B cell (primary cell): ENCODE measurements at regions of chr6 and their contacts with region 1.

Region 1: GRCh38 chr6:119110601-119111548 is 32.4 kb upstream of the FAM184A start:
- DNase-seq: peak; percentile 65
- ATAC-seq: peak; percentile 45
- H3K4me3 ChIP-seq: no peak overlapping the region
- H3K4me3 Mint-ChIP-seq: no peak overlapping the region
- H3K27ac ChIP-seq: no peak overlapping the region
- H3K27ac Mint-ChIP-seq: no peak overlapping the region
- H3K4me1 ChIP-seq: no peaks in the 10 kb centered on the region
- H3K4me1 Mint-ChIP-seq: peaks cover 8% of the 10 kb centered on the region
- H3K27me3 ChIP-seq: no peaks in the 10 kb centered on the region
- H3K27me3 Mint-ChIP-seq: peaks cover 10% of the 10 kb centered on the region
- CTCF ChIP-seq: peak; percentile 74

Region 2: DNA sequence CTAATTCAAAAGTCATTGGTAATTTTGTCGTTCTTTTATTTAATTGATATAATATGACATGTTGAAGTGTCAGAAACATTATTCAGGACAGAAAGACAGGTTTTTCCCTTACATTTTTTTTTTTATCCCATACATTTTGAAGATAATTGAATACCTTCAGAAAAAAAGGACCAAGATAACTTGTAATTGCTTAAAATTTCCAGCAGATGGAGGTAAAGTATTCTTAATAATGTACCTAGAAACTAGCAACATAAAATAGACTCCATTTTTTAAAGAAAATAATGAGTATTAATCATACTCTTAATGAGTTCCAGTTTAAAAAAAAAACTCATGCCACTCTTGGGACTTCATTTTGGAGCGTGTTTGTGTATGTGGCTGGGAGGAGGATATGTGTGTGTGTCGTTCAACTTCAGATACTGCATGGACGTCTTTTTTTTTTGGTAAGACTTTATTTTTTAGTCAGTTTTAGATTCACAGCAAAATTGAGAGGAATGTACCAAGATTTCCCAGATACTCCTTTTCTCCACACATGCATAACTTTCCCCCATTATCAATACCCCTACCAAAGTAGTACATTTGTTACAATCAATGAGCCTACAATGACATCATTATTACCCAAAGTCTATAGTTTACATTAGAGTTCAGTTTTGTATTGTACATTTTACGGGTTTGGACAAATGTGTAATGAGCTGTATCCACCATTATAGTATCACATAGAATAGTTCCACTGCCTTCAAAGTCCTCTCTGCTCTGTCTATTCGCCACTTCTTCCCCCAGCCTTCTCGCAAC is 1764.5 kb before region 1 on chr6:
- CTCF ChIA-PET with region 1: interaction called, 3 read pairs
- POLR2A ChIA-PET with region 1: no interaction called
- intact Hi-C with region 1: loop called (anchors 2 kb)
- DNase-seq: peak; percentile 20
- ATAC-seq: no peak
- H3K4me3 ChIP-seq: no peak overlapping the region
- H3K4me3 Mint-ChIP-seq: no peak overlapping the region
- H3K27ac ChIP-seq: no peak overlapping the region
- H3K27ac Mint-ChIP-seq: no peak overlapping the region
- H3K4me1 ChIP-seq: no peaks in the 10 kb centered on the region
- H3K4me1 Mint-ChIP-seq: no peaks in the 10 kb centered on the region
- H3K27me3 ChIP-seq: no peaks in the 10 kb centered on the region
- H3K27me3 Mint-ChIP-seq: peaks cover 8% of the 10 kb centered on the region
- CTCF ChIP-seq: peak; percentile 85

Region 3: GRCh38 chr6:117449549-117450439 is 1661.1 kb before region 1 on chr6:
- CTCF ChIA-PET with region 1: interaction called, 8 read pairs
- POLR2A ChIA-PET with region 1: no interaction called
- intact Hi-C with region 1: loop called (anchors 2 kb)
- DNase-seq: peak; percentile 63
- ATAC-seq: no peak
- H3K4me3 ChIP-seq: no peak overlapping the region
- H3K4me3 Mint-ChIP-seq: no peak overlapping the region
- H3K27ac ChIP-seq: no peak overlapping the region
- H3K27ac Mint-ChIP-seq: no peak overlapping the region
- H3K4me1 ChIP-seq: no peaks in the 10 kb centered on the region
- H3K4me1 Mint-ChIP-seq: no peaks in the 10 kb centered on the region
- H3K27me3 ChIP-seq: peaks cover 0 to 13% (median 5%) of the 10 kb centered on the region in 4 experiments
- H3K27me3 Mint-ChIP-seq: peaks cover 33% of the 10 kb centered on the region
- CTCF ChIP-seq: peak; percentile 79

Region 4: GRCh38 chr6:117976030-117976651 is 1134.7 kb before region 1 on chr6:
- CTCF ChIA-PET with region 1: interaction called, 11 read pairs
- POLR2A ChIA-PET with region 1: no interaction called
- intact Hi-C with region 1: no loop called
- DNase-seq: peak; percentile 19
- ATAC-seq: no peak
- H3K4me3 ChIP-seq: no peak overlapping the region
- H3K4me3 Mint-ChIP-seq: no peak overlapping the region
- H3K27ac ChIP-seq: no peak overlapping the region
- H3K27ac Mint-ChIP-seq: no peak overlapping the region
- H3K4me1 ChIP-seq: no peaks in the 10 kb centered on the region
- H3K4me1 Mint-ChIP-seq: no peaks in the 10 kb centered on the region
- H3K27me3 ChIP-seq: no peaks in the 10 kb centered on the region
- H3K27me3 Mint-ChIP-seq: peaks cover 8% of the 10 kb centered on the region
- CTCF ChIP-seq: peak; percentile 63

Region 5: DNA sequence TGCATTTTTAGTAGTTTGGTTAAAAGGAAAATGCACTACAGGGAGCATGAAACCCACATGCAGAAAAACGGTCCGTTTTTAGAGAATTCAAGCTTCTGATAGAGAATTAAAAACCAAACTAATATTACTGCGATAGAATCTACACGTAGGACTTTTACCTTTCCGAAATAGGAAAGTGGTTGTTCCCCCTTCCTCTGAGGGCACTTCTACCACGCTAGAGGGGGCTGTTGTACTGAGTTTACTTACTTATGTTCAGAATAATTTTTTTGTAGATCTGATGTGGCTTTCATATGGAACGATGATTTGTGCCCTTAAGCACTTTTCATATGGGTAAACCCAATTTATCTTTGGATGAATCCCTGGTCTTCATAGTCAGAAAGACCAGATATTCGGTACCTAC is 827.1 kb before region 1 on chr6:
- CTCF ChIA-PET with region 1: no interaction called
- POLR2A ChIA-PET with region 1: no interaction called
- intact Hi-C with region 1: loop called (anchors 5 kb)
- DNase-seq: peak; percentile 23
- ATAC-seq: no peak
- H3K4me3 ChIP-seq: no peak overlapping the region
- H3K4me3 Mint-ChIP-seq: no peak overlapping the region
- H3K27ac ChIP-seq: no peak overlapping the region
- H3K27ac Mint-ChIP-seq: no peak overlapping the region
- H3K4me1 ChIP-seq: no peaks in the 10 kb centered on the region
- H3K4me1 Mint-ChIP-seq: no peaks in the 10 kb centered on the region
- H3K27me3 ChIP-seq: no peaks in the 10 kb centered on the region
- H3K27me3 Mint-ChIP-seq: peaks cover 12% of the 10 kb centered on the region
- CTCF ChIP-seq: peak; percentile 32

Region 6: DNA sequence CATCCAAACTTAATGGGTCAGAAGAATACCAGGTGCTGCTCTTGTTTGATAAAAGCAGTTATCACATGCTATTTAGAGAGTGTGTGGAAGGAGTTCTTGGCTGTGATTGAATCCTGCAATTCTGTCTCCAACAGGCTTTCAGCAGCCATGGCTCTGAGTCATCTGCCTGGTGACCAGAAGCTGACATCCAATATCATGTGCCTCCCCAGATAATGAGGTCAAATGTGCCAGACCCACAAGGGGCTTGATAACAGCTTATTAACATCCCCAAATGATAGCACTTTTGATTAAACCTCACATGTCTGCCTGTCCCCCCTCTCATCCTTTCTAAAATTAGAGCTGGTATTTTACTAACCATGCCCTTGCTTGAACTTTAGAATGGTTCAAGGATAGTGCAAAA is 738.5 kb before region 1 on chr6:
- CTCF ChIA-PET with region 1: no interaction called
- POLR2A ChIA-PET with region 1: no interaction called
- intact Hi-C with region 1: no loop called
- DNase-seq: no peak
- ATAC-seq: no peak
- H3K4me3 ChIP-seq: no peak overlapping the region
- H3K4me3 Mint-ChIP-seq: no peak overlapping the region
- H3K27ac ChIP-seq: no peak overlapping the region
- H3K27ac Mint-ChIP-seq: no peak overlapping the region
- H3K4me1 ChIP-seq: no peaks in the 10 kb centered on the region
- H3K4me1 Mint-ChIP-seq: no peaks in the 10 kb centered on the region
- H3K27me3 ChIP-seq: no peaks in the 10 kb centered on the region
- H3K27me3 Mint-ChIP-seq: peaks cover 3% of the 10 kb centered on the region
- CTCF ChIP-seq: no peak

Region 7: GRCh38 chr6:118776607-118777549 is 334.0 kb before region 1 on chr6:
- CTCF ChIA-PET with region 1: interaction called, 7 read pairs
- POLR2A ChIA-PET with region 1: no interaction called
- intact Hi-C with region 1: loop called (anchors 1 kb)
- DNase-seq: peak; percentile 75
- ATAC-seq: peak; percentile 68
- H3K4me3 ChIP-seq: no peak overlapping the region
- H3K4me3 Mint-ChIP-seq: no peak overlapping the region
- H3K27ac ChIP-seq: no peak overlapping the region
- H3K27ac Mint-ChIP-seq: no peak overlapping the region
- H3K4me1 ChIP-seq: no peaks in the 10 kb centered on the region
- H3K4me1 Mint-ChIP-seq: peaks cover 6% of the 10 kb centered on the region
- H3K27me3 ChIP-seq: no peaks in the 10 kb centered on the region
- H3K27me3 Mint-ChIP-seq: peaks cover 4% of the 10 kb centered on the region
- CTCF ChIP-seq: peak; percentile 89

Region 8: DNA sequence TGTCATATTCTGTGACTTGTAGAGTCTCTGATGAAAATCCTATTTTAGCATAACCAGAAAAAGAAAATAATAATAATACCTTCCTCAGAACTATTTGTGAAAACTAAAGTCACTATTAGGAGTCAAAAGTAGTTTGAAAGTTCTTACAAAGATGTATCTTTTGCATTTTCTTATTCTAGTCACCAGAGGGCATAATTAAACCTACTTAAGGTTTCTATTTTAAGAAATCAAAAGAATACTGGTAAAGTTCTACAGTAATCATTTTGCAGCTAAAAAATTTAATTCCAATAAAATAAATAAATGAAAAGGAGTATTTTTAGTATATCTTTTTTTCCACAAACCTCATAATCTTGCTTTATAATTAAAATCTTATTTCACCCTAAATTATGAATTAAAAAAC is 147.9 kb before region 1 on chr6:
- CTCF ChIA-PET with region 1: interaction called, 37 read pairs
- POLR2A ChIA-PET with region 1: no interaction called
- intact Hi-C with region 1: loop called (anchors 1 kb)
- DNase-seq: no peak
- ATAC-seq: no peak
- H3K4me3 ChIP-seq: no peak overlapping the region
- H3K4me3 Mint-ChIP-seq: no peak overlapping the region
- H3K27ac ChIP-seq: no peak overlapping the region
- H3K27ac Mint-ChIP-seq: no peak overlapping the region
- H3K4me1 ChIP-seq: no peaks in the 10 kb centered on the region
- H3K4me1 Mint-ChIP-seq: peaks cover 1% of the 10 kb centered on the region
- H3K27me3 ChIP-seq: no peaks in the 10 kb centered on the region
- H3K27me3 Mint-ChIP-seq: no peaks in the 10 kb centered on the region
- CTCF ChIP-seq: no peak

Region 9: GRCh38 chr6:119084784-119085183 is 26.1 kb before region 1 on chr6:
- CTCF ChIA-PET with region 1: no interaction called
- POLR2A ChIA-PET with region 1: no interaction called
- intact Hi-C with region 1: no loop called
- DNase-seq: no peak
- ATAC-seq: no peak
- H3K4me3 ChIP-seq: no peak overlapping the region
- H3K4me3 Mint-ChIP-seq: no peak overlapping the region
- H3K27ac ChIP-seq: no peak overlapping the region
- H3K27ac Mint-ChIP-seq: no peak overlapping the region
- H3K4me1 ChIP-seq: no peaks in the 10 kb centered on the region
- H3K4me1 Mint-ChIP-seq: no peaks in the 10 kb centered on the region
- H3K27me3 ChIP-seq: peaks cover 0 to under 1% (median 0%) of the 10 kb centered on the region in 4 experiments
- H3K27me3 Mint-ChIP-seq: peaks cover 11% of the 10 kb centered on the region
- CTCF ChIP-seq: no peak